ENCODE measurements at regions of chr21 and their contacts with region 1.

Region 1: GRCh38 chr21:38669176-38669575 is 136.6 kb upstream of the ETS2 start:
- DNase-seq: no peak
- H3K4me3 ChIP-seq: no peak overlapping the region
- H3K27me3 ChIP-seq: peaks cover 40% of the 10 kb centered on the region
- CTCF ChIP-seq: peak; percentile 66

Region 2: GRCh38 chr21:38683226-38683625 is 14.1 kb after region 1 on chr21:
- CTCF ChIA-PET with region 1: interaction called, 12 read pairs
- POLR2A ChIA-PET with region 1: no interaction called
- DNase-seq: no peak
- H3K4me3 ChIP-seq: no peak overlapping the region
- H3K27me3 ChIP-seq: peaks cover 19% of the 10 kb centered on the region
- CTCF ChIP-seq: no peak

Region 3: DNA sequence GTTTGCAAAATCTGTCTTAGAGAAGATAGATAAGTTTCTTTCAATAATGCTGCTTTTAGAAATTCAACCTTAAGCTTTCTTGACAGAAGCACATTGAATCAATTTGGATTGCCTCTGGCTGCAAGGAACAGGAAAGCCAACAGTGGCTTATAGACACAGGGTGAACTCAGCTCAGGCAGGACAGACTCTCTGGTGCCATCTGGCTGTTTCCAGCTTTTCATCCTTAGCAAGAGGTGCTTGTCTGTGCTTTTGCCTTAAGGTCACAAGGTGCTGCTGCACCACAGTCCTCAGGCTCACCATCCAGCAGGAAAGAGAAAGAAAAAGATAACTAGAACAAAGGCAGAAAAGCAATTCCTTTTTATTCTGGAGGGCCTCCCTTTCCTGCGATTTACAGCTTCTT is 42.9 kb after region 1 on chr21:
- CTCF ChIA-PET with region 1: interaction called, 12 read pairs
- POLR2A ChIA-PET with region 1: no interaction called
- DNase-seq: no peak
- H3K4me3 ChIP-seq: no peak overlapping the region
- H3K27me3 ChIP-seq: peaks cover 11% of the 10 kb centered on the region
- CTCF ChIP-seq: peak; percentile 62

Region 4: GRCh38 chr21:39004634-39005501 is 335.7 kb after region 1 on chr21:
- CTCF ChIA-PET with region 1: no interaction called
- POLR2A ChIA-PET with region 1: no interaction called
- DNase-seq: no peak
- H3K4me3 ChIP-seq: no peak overlapping the region
- H3K27me3 ChIP-seq: no peaks in the 10 kb centered on the region
- CTCF ChIP-seq: no peak

Region 5: DNA sequence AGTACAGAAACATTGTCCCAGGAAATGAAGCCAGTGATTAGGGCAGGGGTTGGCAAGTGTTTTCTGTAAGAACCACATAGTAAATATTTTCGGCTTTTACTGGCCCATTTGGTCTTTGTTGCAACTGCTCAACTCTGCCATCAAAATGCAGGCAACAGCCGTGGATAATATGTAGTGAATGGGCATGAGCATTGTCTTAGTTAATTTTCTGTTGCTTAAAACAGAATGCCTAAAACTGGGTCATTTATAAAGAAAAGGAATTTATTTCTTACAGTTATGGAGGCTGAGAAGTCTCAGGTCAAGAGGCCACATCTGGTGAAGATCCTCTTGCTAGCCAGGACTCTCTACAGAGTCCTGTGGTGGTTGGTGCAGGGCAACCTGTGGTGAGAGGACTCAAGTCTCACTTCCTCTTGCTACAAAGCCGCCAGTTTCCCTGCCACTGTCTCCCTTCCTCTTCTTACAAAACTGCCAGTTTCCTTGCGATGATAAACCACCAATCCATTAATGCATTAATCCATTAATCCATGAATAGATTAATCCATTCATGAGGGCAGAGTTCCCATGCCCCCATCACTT is 347.7 kb after region 1 on chr21:
- CTCF ChIA-PET with region 1: no interaction called
- POLR2A ChIA-PET with region 1: no interaction called
- DNase-seq: peak; percentile 43
- H3K4me3 ChIP-seq: no peak overlapping the region
- H3K27me3 ChIP-seq: no peaks in the 10 kb centered on the region
- CTCF ChIP-seq: no peak

Region 6: DNA sequence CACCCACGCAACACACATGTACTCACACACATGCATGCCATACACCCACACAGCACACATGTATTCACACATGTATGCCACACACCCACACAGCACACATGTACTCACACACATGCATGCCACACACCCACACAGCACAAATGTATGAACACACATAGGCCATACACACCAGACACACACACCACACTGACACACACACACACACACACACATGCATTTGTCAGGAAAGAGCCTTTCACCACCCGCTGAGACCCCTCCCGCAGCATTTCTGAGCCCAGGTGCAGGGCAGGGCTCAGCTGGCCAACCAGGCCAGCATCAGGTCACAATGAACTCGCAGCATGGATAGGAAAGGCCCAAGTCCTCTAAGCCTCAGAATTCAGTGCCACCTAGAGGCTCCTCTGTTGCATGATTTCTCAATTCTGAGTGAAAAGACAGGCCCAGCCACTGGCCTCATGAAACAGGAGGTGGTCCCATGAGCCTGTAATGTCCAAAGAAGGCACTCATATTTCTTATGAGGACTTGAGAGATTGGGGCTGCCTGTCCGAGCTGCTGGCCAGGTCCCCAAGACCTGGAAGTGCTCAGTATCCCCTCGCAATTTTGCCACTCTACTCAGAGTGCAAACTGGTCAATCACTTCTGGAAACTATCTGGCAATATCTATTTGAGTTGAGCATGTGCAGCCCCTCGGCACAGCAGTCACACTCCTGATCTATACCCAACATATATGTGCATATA is 456.7 kb after region 1 on chr21:
- CTCF ChIA-PET with region 1: interaction called, 12 read pairs
- POLR2A ChIA-PET with region 1: no interaction called
- DNase-seq: no peak
- H3K4me3 ChIP-seq: no peak overlapping the region
- H3K27me3 ChIP-seq: no peaks in the 10 kb centered on the region; the same call in 1 of the 2 replicates
- CTCF ChIP-seq: peak; percentile 73

Measured in BJ (cell line).